A549 (cell line): ENCODE measurements at regions of chr14 and their contacts with region 1.

Region 1: DNA sequence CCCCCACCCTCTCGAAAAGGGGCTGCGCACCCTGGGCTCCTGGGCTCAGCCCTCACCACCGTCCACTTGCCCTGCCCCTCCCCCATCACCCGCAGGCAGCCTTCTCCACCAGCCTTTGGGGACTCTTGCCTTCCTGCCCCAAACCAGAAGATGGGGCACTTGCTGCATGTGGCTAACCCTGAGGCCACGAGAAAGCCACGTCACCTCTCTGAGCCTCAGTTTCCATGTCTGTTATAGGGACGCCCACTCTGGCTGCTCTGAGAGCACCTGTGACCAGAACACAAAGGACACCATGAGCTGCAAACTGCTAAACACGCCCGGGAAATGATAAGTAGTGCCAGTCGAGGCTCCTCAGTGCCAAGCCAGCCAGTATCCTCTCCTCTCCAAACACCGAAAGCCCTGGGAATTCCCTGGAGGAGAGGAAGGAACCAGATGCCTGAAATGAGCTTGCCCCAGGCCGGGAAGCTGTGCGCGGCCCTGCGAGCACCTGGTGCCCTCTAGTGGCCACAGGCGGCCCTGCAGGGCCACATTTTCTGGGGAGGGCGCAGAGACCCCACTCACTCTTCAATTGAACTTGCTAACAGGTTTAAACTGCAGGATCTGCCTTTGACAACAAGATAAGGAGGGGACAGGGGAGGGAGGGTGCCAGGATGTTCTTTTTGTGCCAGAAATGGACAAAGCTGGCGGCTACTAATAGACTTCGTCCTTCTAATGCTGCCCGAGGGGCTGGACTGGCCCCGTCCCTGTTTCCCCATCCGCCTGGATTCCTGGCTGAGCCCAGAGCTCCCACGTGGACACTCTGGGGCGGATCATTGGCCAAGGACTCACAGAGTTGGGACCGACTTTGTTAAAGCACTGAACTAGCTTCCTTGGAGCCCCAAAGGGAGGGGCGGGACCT is 10.2 kb upstream of the SERPINA9 start:
- DNase-seq: peak; percentile 37 to 63
- ATAC-seq: peak; percentile 80 to 91
- H3K4me3 ChIP-seq: no peak overlapping the region
- H3K27ac ChIP-seq: peak overlapping the region; percentile 37 to 40; a peak in 1 of 6 replicates
- H3K4me1 ChIP-seq: 0 out of 3 replicates have a peak, but pooled peaks cover 3% of the 10 kb centered on the region
- CTCF ChIP-seq: peak; percentile 96
- EP300 ChIP-seq: no peak
- POLR2A ChIP-seq: no peak
- RAD21 ChIP-seq: peak; percentile 79 to 87

Region 2: GRCh38 chr14:94330857-94331256 is 155.3 kb before region 1 on chr14:
- CTCF ChIA-PET with region 1: no interaction called
- POLR2A ChIA-PET with region 1: no interaction called
- DNase-seq: no peak
- ATAC-seq: no peak
- H3K4me3 ChIP-seq: no peak overlapping the region
- H3K27ac ChIP-seq: no peak overlapping the region
- H3K4me1 ChIP-seq: no peaks in the 10 kb centered on the region
- CTCF ChIP-seq: no peak
- EP300 ChIP-seq: no peak
- POLR2A ChIP-seq: no peak
- RAD21 ChIP-seq: no peak

Region 3: DNA sequence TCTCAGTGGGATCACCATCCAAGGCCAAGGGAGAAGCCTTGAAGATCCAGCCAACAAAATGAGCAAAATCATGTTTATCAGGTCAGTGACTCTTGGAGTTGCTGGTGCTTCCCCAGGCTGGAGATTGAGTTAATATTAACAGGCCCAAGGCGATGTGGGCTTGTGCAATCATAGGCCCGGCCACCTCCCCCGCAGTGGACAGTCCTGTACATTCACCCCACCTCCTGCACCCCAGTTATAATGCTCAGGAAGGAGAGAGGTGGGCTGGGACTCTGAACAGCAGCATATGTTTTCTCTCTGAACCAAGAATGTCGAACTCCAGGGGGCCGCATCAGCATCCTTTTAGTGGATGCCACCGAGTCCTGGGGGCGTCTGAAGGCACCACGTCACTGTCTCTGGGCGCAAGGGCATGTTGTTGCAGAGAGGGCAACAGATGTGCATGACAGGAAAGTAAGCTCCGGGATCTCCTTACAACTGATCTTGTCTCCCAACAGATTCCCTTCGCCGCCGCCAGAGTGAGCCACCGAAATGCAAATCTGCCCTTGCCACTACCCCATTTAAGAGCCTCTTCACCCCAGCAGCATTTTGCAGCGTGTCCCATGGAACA is 130.9 kb before region 1 on chr14:
- CTCF ChIA-PET with region 1: interaction called, 24 read pairs
- POLR2A ChIA-PET with region 1: no interaction called
- DNase-seq: peak in 1 of 2 experiments; percentile 61
- ATAC-seq: peak; percentile 81 to 90
- H3K4me3 ChIP-seq: no peak overlapping the region
- H3K27ac ChIP-seq: no peak overlapping the region
- H3K4me1 ChIP-seq: peaks cover 13% of the 10 kb centered on the region; the same call in 2 of the 3 replicates
- CTCF ChIP-seq: peak; percentile 43
- EP300 ChIP-seq: no peak
- POLR2A ChIP-seq: no peak
- RAD21 ChIP-seq: peak; percentile 59

Region 4: GRCh38 chr14:94445003-94445402 is 41.2 kb before region 1 on chr14:
- CTCF ChIA-PET with region 1: interaction called, 15 read pairs
- POLR2A ChIA-PET with region 1: no interaction called
- DNase-seq: no peak
- ATAC-seq: no peak
- H3K4me3 ChIP-seq: no peak overlapping the region
- H3K27ac ChIP-seq: no peak overlapping the region
- H3K4me1 ChIP-seq: no peaks in the 10 kb centered on the region
- CTCF ChIP-seq: no peak
- EP300 ChIP-seq: no peak
- POLR2A ChIP-seq: no peak
- RAD21 ChIP-seq: no peak

Region 5: DNA sequence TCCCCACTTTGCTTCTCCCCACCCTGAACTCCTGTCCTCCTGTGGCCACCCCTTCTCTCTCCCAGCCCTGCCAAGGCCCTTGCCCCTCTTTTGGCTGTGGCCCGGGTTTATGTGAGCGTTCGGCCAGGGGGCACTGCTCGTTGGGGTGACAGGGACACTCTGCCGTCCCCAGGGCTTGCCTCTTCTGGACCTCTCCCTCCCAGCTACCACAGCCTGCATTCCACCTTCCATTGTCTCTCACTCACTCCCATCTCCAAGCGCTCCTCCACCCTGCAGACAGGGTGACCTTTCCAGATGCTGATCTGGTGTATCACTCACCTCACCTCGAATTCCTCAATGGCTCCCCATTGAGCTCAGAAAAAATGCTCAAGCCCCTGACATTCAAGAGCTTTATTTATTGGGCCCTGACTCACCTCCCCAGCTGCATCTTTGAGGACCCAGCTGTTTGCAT is 11.6 kb before region 1 on chr14:
- CTCF ChIA-PET with region 1: interaction called, 47 read pairs
- POLR2A ChIA-PET with region 1: interaction called, 4 read pairs
- DNase-seq: peak in 1 of 2 experiments; percentile 28
- ATAC-seq: peak; percentile 66 to 67; a peak in 4 of 6 replicates
- H3K4me3 ChIP-seq: no peak overlapping the region
- H3K27ac ChIP-seq: no peak overlapping the region
- H3K4me1 ChIP-seq: no peaks in the 10 kb centered on the region
- CTCF ChIP-seq: no peak
- EP300 ChIP-seq: no peak
- POLR2A ChIP-seq: no peak
- RAD21 ChIP-seq: no peak

Region 6: GRCh38 chr14:94531187-94531586 is 45.0 kb after region 1 on chr14:
- CTCF ChIA-PET with region 1: interaction called, 10 read pairs
- POLR2A ChIA-PET with region 1: no interaction called
- DNase-seq: no peak
- ATAC-seq: no peak
- H3K4me3 ChIP-seq: no peak overlapping the region
- H3K27ac ChIP-seq: no peak overlapping the region
- H3K4me1 ChIP-seq: no peaks in the 10 kb centered on the region
- CTCF ChIP-seq: no peak
- EP300 ChIP-seq: no peak
- POLR2A ChIP-seq: no peak
- RAD21 ChIP-seq: no peak